Naive thymus-derived CD4-positive, alpha-beta T cell (primary cell): ENCODE measurements at regions of chr11 and their contacts with region 1.

Region 1: DNA sequence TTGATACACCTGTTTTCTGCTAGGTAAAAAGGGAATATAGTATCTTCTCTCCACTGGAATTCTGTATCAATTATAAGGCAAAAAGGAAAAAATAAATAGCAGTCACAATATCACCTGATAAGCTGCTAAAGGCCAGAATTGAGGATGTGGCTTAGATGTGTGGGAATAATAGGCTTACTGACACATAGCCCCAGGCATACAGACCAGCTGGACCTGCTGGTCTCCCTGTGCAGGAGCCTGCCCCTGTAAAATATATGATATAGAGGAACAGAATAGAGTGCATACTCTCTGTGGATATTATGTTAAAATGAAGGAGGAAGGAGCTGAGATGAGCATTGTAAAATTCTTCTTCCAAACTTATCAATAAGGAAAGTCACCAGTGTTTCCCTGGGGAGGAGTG is 36.9 kb upstream of the PDE3B start:
- DNase-seq: no peak
- ATAC-seq: no peak
- H3K4me3 ChIP-seq: no peak overlapping the region
- H3K4me3 Mint-ChIP-seq: no peak overlapping the region
- H3K27ac ChIP-seq: no peak overlapping the region
- H3K27ac Mint-ChIP-seq: peak overlapping the region in 2 of 9 donors; percentile 6 to 32
- H3K4me1 ChIP-seq: peaks cover under 1 to 3% of the 10 kb centered on the region in 2 donors
- H3K4me1 Mint-ChIP-seq: peaks cover 12 to 29% (median 23%) of the 10 kb centered on the region in 7 donors
- H3K27me3 ChIP-seq: no peaks in the 10 kb centered on the region
- H3K27me3 Mint-ChIP-seq: no peaks in the 10 kb centered on the region

Region 2: DNA sequence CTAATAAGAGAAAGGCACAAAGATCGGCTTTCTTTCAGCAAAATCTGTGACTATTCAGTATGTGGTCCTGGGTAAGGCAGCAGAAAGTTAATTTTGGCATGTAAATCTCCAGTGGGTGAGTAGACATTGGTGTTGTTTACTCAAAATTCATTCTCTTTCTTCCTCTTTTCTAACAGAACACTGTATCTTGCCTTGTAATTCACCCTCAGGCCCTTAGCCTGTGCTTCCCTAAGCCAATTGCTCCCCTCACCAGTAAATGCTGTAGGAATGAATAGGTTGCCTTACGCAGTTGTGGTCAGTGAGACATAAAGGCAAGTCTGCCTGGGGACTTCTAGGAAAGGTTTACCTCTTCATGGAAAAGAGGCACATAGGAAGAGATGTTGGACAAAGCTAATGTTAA is 13.1 kb before region 1 on chr11:
- CTCF ChIA-PET with region 1: no interaction called
- POLR2A ChIA-PET with region 1: no interaction called
- intact Hi-C with region 1: loop called in 1 of 2 experiments (anchors 2 kb)
- DNase-seq: no peak
- ATAC-seq: no peak
- H3K4me3 ChIP-seq: no peak overlapping the region
- H3K4me3 Mint-ChIP-seq: peak overlapping the region in 1 of 10 donors; percentile 16
- H3K27ac ChIP-seq: no peak overlapping the region
- H3K27ac Mint-ChIP-seq: peak overlapping the region in 6 of 9 donors; percentile 1 to 17 (median 10)
- H3K4me1 ChIP-seq: no peaks in the 10 kb centered on the region
- H3K4me1 Mint-ChIP-seq: peaks cover 10 to 55% (median 44%) of the 10 kb centered on the region in 7 donors
- H3K27me3 ChIP-seq: no peaks in the 10 kb centered on the region
- H3K27me3 Mint-ChIP-seq: no peaks in the 10 kb centered on the region